OCI-LY7 (cell line): ENCODE measurements at regions of chr2 and their contacts with region 1.

Region 1: GRCh38 chr2:157150747-157151146 is 106.8 kb upstream of the GALNT5 start:
- DNase-seq: no peak
- H3K4me3 ChIP-seq: no peak overlapping the region
- H3K27ac ChIP-seq: no peak overlapping the region
- H3K4me1 ChIP-seq: no peaks in the 10 kb centered on the region
- CTCF ChIP-seq: no peak

Region 2: GRCh38 chr2:156896294-156896693 is 254.5 kb before region 1 on chr2:
- CTCF ChIA-PET with region 1: no interaction called
- POLR2A ChIA-PET with region 1: no interaction called
- intact Hi-C with region 1: no loop called
- DNase-seq: no peak
- H3K4me3 ChIP-seq: no peak overlapping the region
- H3K27ac ChIP-seq: no peak overlapping the region
- H3K4me1 ChIP-seq: no peaks in the 10 kb centered on the region
- CTCF ChIP-seq: no peak

Region 3: DNA sequence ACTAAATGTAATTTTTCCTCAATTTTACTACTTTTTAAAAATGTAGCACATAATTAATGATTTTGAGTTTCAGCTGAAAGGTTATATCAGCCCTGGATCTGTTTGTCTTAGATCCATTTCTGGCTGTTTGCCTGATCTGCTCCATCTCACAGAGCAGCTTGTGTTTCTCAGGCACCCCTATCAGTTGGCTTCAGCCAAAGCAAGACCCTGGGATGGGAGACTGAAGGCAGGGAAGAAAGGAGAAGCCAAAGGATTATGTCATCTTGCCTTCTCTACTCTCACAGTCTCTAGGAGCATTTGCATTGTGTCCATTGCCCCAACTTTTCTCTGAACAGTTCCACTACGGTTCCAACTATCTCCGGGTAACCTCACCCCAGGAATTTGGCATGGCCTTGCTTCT is 1195.3 kb after region 1 on chr2:
- CTCF ChIA-PET with region 1: no interaction called
- POLR2A ChIA-PET with region 1: no interaction called
- intact Hi-C with region 1: loop called (anchors 10 kb)
- DNase-seq: no peak
- H3K4me3 ChIP-seq: no peak overlapping the region
- H3K27ac ChIP-seq: no peak overlapping the region
- H3K4me1 ChIP-seq: no peaks in the 10 kb centered on the region
- CTCF ChIP-seq: no peak